ENCODE measurements at regions of chr1 and their contacts with region 1.

Region 1: GRCh38 chr1:65687428-65688214 is 105.1 kb upstream of the PDE4B start:
- DNase-seq: peak; percentile 71
- ATAC-seq: peak; percentile 56
- H3K4me3 ChIP-seq: no peak overlapping the region
- H3K4me3 Mint-ChIP-seq: no peak overlapping the region
- H3K27ac ChIP-seq: no peak overlapping the region
- H3K27ac Mint-ChIP-seq: no peak overlapping the region
- H3K4me1 ChIP-seq: no peaks in the 10 kb centered on the region
- H3K4me1 Mint-ChIP-seq: no peaks in the 10 kb centered on the region
- H3K27me3 ChIP-seq: no peaks in the 10 kb centered on the region
- H3K27me3 Mint-ChIP-seq: peaks cover 29% of the 10 kb centered on the region
- CTCF ChIP-seq: peak; percentile 95

Region 2: GRCh38 chr1:65075123-65075976 is 612.3 kb before region 1 on chr1:
- CTCF ChIA-PET with region 1: interaction called, 4 read pairs
- POLR2A ChIA-PET with region 1: no interaction called
- intact Hi-C with region 1: loop called (anchors 2 kb)
- DNase-seq: peak; percentile 80
- ATAC-seq: peak; percentile 92
- H3K4me3 ChIP-seq: no peak overlapping the region
- H3K4me3 Mint-ChIP-seq: no peak overlapping the region
- H3K27ac ChIP-seq: no peak overlapping the region
- H3K27ac Mint-ChIP-seq: no peak overlapping the region
- H3K4me1 ChIP-seq: no peaks in the 10 kb centered on the region
- H3K4me1 Mint-ChIP-seq: no peaks in the 10 kb centered on the region
- H3K27me3 ChIP-seq: peaks cover 0 to 2% (median 0%) of the 10 kb centered on the region in 4 experiments
- H3K27me3 Mint-ChIP-seq: peaks cover 19% of the 10 kb centered on the region
- CTCF ChIP-seq: peak; percentile 80

Region 3: GRCh38 chr1:65214340-65215027 is 473.1 kb before region 1 on chr1:
- CTCF ChIA-PET with region 1: interaction called, 19 read pairs
- POLR2A ChIA-PET with region 1: no interaction called
- intact Hi-C with region 1: loop called (anchors 1 kb)
- DNase-seq: no peak
- ATAC-seq: no peak
- H3K4me3 ChIP-seq: no peak overlapping the region
- H3K4me3 Mint-ChIP-seq: no peak overlapping the region
- H3K27ac ChIP-seq: no peak overlapping the region
- H3K27ac Mint-ChIP-seq: no peak overlapping the region
- H3K4me1 ChIP-seq: no peaks in the 10 kb centered on the region
- H3K4me1 Mint-ChIP-seq: peaks cover 4% of the 10 kb centered on the region
- H3K27me3 ChIP-seq: no peaks in the 10 kb centered on the region
- H3K27me3 Mint-ChIP-seq: no peaks in the 10 kb centered on the region
- CTCF ChIP-seq: no peak

Region 4: DNA sequence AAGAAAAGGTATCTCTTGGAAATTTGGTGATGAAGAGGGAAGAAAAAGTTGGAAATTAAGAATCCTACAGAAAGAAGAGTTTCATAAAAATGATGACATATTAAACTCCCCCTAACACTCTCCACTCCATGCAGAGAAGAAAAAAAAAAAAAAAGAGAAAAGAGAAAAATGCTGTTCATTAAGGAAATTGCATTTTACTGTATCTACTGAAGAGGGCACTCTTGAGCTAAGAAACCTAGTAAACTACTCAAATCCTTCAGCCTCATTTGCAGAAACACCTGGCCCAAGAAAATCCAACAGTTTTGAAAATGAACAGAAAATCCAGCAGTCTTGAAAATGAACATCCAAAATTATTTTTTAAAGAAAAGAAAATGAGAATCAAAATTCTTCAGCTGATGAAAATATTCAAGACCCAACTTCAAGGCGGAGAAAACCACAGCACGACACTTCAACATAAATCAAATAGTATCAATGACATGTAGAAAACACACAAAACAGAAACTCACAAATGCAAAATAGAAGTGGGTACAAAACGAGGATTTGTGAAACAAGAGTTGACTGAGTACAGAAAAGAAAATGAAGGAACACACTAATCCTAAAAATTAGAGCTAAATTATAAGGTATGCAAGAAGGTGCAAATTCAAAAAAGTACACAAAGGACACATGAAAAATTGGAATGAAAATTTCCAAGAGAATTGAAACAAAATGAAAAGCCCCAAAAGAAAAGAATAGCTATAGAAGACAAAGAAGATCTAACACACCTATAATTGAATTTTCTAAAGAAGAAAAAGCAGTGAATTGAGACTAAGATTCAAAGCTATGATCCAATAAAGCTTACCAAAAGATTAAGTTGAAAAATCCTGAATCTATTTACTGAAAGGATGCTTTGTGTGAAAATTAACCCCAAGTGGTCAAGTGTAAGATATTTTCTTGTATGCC is 451.5 kb before region 1 on chr1:
- CTCF ChIA-PET with region 1: interaction called, 9 read pairs
- POLR2A ChIA-PET with region 1: no interaction called
- intact Hi-C with region 1: loop called (anchors 2 kb)
- DNase-seq: no peak
- ATAC-seq: no peak
- H3K4me3 ChIP-seq: no peak overlapping the region
- H3K4me3 Mint-ChIP-seq: no peak overlapping the region
- H3K27ac ChIP-seq: no peak overlapping the region
- H3K27ac Mint-ChIP-seq: no peak overlapping the region
- H3K4me1 ChIP-seq: no peaks in the 10 kb centered on the region
- H3K4me1 Mint-ChIP-seq: no peaks in the 10 kb centered on the region
- H3K27me3 ChIP-seq: no peaks in the 10 kb centered on the region
- H3K27me3 Mint-ChIP-seq: peaks cover 18% of the 10 kb centered on the region
- CTCF ChIP-seq: peak; percentile 16

Region 5: GRCh38 chr1:65431111-65431705 is 256.4 kb before region 1 on chr1:
- CTCF ChIA-PET with region 1: interaction called, 5 read pairs
- POLR2A ChIA-PET with region 1: no interaction called
- intact Hi-C with region 1: loop called (anchors 1 kb)
- DNase-seq: peak; percentile 31
- ATAC-seq: no peak
- H3K4me3 ChIP-seq: no peak overlapping the region
- H3K4me3 Mint-ChIP-seq: no peak overlapping the region
- H3K27ac ChIP-seq: no peak overlapping the region
- H3K27ac Mint-ChIP-seq: no peak overlapping the region
- H3K4me1 ChIP-seq: no peaks in the 10 kb centered on the region
- H3K4me1 Mint-ChIP-seq: no peaks in the 10 kb centered on the region
- H3K27me3 ChIP-seq: no peaks in the 10 kb centered on the region
- H3K27me3 Mint-ChIP-seq: no peaks in the 10 kb centered on the region
- CTCF ChIP-seq: peak; percentile 79

Region 6: DNA sequence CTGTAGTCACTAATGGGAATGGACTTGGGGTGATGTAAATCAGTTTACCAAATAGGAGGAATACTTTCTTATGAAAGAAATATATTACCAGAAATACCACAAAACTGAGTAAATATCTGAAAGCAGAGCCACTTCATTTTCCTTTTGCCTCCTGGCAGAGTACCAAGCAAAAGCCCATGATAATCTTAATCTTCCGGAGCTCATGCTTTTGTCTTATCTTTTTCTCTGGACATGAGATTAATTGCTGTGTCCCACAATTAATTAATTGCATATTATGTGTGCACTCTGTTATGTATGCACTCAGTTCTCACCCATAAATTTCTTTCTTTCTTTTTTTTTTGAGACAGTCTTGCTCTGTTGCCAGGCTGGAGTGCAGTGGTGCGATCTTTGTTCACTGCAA is 11.0 kb after region 1 on chr1:
- CTCF ChIA-PET with region 1: interaction called, 20 read pairs
- POLR2A ChIA-PET with region 1: no interaction called
- intact Hi-C with region 1: no loop called
- DNase-seq: no peak
- ATAC-seq: no peak
- H3K4me3 ChIP-seq: no peak overlapping the region
- H3K4me3 Mint-ChIP-seq: no peak overlapping the region
- H3K27ac ChIP-seq: no peak overlapping the region
- H3K27ac Mint-ChIP-seq: no peak overlapping the region
- H3K4me1 ChIP-seq: no peaks in the 10 kb centered on the region
- H3K4me1 Mint-ChIP-seq: no peaks in the 10 kb centered on the region
- H3K27me3 ChIP-seq: no peaks in the 10 kb centered on the region
- H3K27me3 Mint-ChIP-seq: peaks cover 4% of the 10 kb centered on the region
- CTCF ChIP-seq: no peak

Region 7: DNA sequence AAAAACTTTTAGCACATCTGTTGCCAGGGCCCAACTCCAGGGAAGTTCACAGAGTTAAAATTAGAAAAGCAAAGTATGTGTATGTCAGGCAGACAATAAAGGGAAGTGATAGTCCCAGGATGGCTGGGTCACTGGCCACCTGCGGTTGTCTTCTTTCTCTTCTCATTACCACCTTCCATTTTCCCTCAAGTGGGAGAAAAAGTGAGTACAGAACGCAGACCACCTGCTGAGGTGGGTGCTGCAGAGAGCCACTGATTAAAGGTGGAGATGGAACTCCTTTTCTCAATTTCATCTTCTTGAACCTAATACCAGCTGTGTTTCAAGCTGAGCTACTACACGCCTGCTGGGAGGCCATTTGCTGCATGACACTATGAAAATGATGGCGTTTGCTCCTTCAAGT is 16.2 kb after region 1 on chr1:
- CTCF ChIA-PET with region 1: interaction called, 20 read pairs
- POLR2A ChIA-PET with region 1: no interaction called
- intact Hi-C with region 1: no loop called
- DNase-seq: no peak
- ATAC-seq: no peak
- H3K4me3 ChIP-seq: no peak overlapping the region
- H3K4me3 Mint-ChIP-seq: no peak overlapping the region
- H3K27ac ChIP-seq: no peak overlapping the region
- H3K27ac Mint-ChIP-seq: no peak overlapping the region
- H3K4me1 ChIP-seq: no peaks in the 10 kb centered on the region
- H3K4me1 Mint-ChIP-seq: no peaks in the 10 kb centered on the region
- H3K27me3 ChIP-seq: no peaks in the 10 kb centered on the region
- H3K27me3 Mint-ChIP-seq: peaks cover 5% of the 10 kb centered on the region
- CTCF ChIP-seq: no peak

Region 8: DNA sequence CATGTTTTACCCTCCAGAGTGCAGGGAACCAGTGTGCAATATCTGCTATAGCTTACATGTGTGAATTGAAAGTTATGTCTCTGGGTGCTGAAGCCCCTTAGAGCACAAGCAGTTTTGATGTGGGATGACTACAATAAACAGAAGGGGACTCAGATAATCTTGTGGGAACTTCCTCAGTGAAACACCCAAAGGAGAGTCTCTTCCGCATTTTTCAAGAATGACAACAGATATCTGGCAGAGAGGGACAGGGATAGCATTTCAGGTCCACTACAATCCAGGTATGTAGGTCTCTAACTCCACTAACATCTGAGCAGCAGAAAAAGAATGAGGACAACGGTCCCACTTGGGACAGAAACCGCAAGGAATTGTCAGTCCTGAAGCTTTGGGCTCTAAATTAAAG is 37.4 kb after region 1 on chr1:
- CTCF ChIA-PET with region 1: no interaction called
- POLR2A ChIA-PET with region 1: no interaction called
- intact Hi-C with region 1: no loop called
- DNase-seq: no peak
- ATAC-seq: no peak
- H3K4me3 ChIP-seq: no peak overlapping the region
- H3K4me3 Mint-ChIP-seq: no peak overlapping the region
- H3K27ac ChIP-seq: no peak overlapping the region
- H3K27ac Mint-ChIP-seq: no peak overlapping the region
- H3K4me1 ChIP-seq: no peaks in the 10 kb centered on the region
- H3K4me1 Mint-ChIP-seq: no peaks in the 10 kb centered on the region
- H3K27me3 ChIP-seq: no peaks in the 10 kb centered on the region
- H3K27me3 Mint-ChIP-seq: peaks cover 7% of the 10 kb centered on the region
- CTCF ChIP-seq: no peak